ENCODE measurements at regions of chr1 and their contacts with region 1.

Region 1: GRCh38 chr1:62783723-62784508 is at the start of gene ATG4C:
- DNase-seq: peak; percentile 90
- H3K4me3 Mint-ChIP-seq: no peak within 1 kb of the TSS
- H3K27ac Mint-ChIP-seq: no peak within 1 kb of the TSS
- H3K4me1 Mint-ChIP-seq: peaks cover 8% of the 10 kb centered on the region
- H3K27me3 Mint-ChIP-seq: peaks cover 4% of the 10 kb centered on the region
- total RNA-seq, gene ATG4C: 8.8 TPM in 2 replicates

Region 2: DNA sequence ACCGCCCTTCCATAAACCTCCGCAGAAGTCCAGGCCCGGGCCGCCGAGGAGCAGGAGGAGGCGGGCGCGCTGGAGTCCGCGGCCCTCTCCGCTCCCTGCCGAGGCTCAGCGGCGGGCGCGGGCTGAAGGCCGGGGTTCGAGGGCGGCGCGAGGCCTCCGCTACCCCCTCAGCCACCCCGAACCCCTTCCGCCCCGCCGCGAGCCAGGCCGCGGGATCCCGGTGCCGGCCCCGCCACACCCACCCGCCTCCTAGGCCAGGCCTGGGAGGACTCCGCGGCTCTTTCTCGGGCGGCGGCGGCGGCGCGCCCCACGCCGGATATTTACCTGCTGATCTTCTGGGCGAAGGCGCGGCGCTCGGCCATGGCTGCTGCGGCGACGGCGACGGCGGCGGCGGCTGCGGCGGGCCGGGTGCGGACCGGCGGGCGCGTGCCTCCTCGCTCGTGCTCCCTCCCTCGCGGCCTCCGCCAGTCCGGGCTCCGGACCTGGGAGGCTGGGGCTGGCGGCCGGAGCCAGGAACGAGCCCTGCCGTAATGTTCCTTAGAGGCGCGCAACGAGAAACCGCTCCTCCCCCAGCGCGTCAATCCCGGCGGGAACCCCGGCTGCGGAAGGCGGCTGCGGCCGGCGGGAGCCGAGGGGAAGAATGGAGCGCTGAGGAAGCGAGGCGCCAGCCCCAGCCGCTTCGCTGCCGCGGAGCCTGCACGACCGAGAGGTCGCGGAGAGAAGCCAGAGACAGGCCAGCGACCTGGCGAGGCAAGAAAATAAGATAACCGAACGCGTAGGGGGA is 95.8 kb before region 1 on chr1 and contains the start of gene DOCK7:
- intact Hi-C with region 1: loop called (anchors 1 kb)
- DNase-seq: peak; percentile 31
- H3K4me3 Mint-ChIP-seq: peak within 1 kb of the TSS; percentile 92
- H3K27ac Mint-ChIP-seq: peak within 1 kb of the TSS; percentile 81
- H3K4me1 Mint-ChIP-seq: peaks cover 18% of the 10 kb centered on the region
- H3K27me3 Mint-ChIP-seq: peaks cover 8% of the 10 kb centered on the region
- total RNA-seq, gene DOCK7: 13.4 and 13.6 TPM in 2 replicates

Region 3: DNA sequence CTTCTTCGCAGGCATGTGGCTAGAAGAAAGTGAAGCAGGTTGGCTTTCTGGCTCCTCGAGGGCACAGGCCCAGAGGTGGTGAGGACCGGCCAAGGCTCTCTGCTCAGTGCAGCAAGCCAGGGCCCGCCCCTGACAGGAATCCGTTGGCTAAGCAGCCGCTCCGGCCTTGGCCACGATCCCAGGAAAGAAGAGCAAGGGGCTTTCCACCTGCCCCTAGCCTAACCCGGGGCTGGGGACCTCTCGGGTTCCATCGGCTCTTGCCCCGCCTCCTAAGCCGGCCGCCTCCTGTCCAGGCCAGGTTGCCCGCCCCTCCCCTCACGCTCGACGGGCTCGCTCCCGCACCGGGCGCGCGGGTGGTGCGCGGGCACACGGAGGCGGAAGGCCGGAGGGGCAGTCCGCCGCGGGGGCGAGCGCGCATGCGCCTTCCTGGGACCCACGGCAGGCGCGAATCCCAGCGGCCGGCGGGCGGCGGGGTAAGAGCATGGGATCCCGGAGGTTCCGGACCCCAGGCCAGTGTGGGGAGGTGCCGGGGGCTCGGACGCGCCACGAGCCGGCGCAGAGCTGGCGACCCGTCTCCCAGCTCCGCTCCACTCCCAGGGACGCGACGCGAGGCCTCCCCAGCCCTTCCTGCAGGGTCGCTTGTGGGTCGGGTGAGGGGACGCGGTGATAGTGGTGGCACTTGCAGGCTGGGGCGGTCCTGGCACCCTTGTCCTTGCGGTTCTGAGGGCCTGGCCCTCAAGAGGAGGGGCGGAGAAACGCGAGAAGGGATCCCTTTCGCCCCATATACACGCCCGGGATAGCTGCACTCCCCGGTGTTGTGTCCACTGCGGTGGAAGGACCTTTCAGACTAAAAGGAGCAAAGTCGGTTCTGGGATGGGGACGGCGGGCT is 583.5 kb after region 1 on chr1 and contains the start of gene ALG6:
- intact Hi-C with region 1: loop called (anchors 1 kb)
- DNase-seq: peak; percentile 93
- H3K4me3 Mint-ChIP-seq: peak within 1 kb of the TSS; percentile 90
- H3K27ac Mint-ChIP-seq: peak within 1 kb of the TSS; percentile 74
- H3K4me1 Mint-ChIP-seq: peaks cover 16% of the 10 kb centered on the region
- H3K27me3 Mint-ChIP-seq: peaks cover under 1% of the 10 kb centered on the region
- total RNA-seq, gene ALG6: 25.8 and 26.9 TPM in 2 replicates